ENCODE measurements at regions of chr3 and their contacts with region 1.

Region 1: GRCh38 chr3:28286595-28286994 is 45.2 kb downstream of the CMC1 start:
- DNase-seq: peak; percentile 8
- ATAC-seq: peak; percentile 96
- H3K4me3 ChIP-seq: no peak overlapping the region
- H3K27ac ChIP-seq: no peak overlapping the region
- H3K4me1 ChIP-seq: no peaks in the 10 kb centered on the region
- H3K27me3 ChIP-seq: no peaks in the 10 kb centered on the region
- CTCF ChIP-seq: peak; percentile 48 to 63 (median 50); a peak in 5 of 6 replicates
- EP300 ChIP-seq: no peak
- POLR2A ChIP-seq: no peak
- RAD21 ChIP-seq: peak; percentile 73

Region 2: GRCh38 chr3:28252001-28252431 is 34.6 kb before region 1 on chr3:
- CTCF ChIA-PET with region 1: interaction called, 9 read pairs
- POLR2A ChIA-PET with region 1: interaction called, 3 read pairs
- RAD21 ChIA-PET with region 1: interaction called, 25 read pairs
- SMC1A ChIA-PET with region 1: interaction called, 5 read pairs
- in situ Hi-C with region 1: no loop called
- intact Hi-C with region 1: no loop called
- DNase-seq: no peak
- ATAC-seq: peak; percentile 86
- H3K4me3 ChIP-seq: no peak overlapping the region
- H3K27ac ChIP-seq: no peak overlapping the region
- H3K4me1 ChIP-seq: no peaks in the 10 kb centered on the region; the same call in 1 of the 2 replicates
- H3K27me3 ChIP-seq: no peaks in the 10 kb centered on the region
- CTCF ChIP-seq: no peak
- EP300 ChIP-seq: peak in 1 of 2 experiments; percentile 46; a peak in 2 of 4 replicates
- POLR2A ChIP-seq: no peak
- RAD21 ChIP-seq: no peak

Region 3: GRCh38 chr3:28637742-28638141 is 351.1 kb after region 1 on chr3:
- CTCF ChIA-PET with region 1: no interaction called
- POLR2A ChIA-PET with region 1: no interaction called
- RAD21 ChIA-PET with region 1: no interaction called
- SMC1A ChIA-PET with region 1: no interaction called
- in situ Hi-C with region 1: no loop called
- intact Hi-C with region 1: no loop called
- DNase-seq: no peak
- ATAC-seq: no peak
- H3K4me3 ChIP-seq: no peak overlapping the region
- H3K27ac ChIP-seq: no peak overlapping the region
- H3K4me1 ChIP-seq: no peaks in the 10 kb centered on the region
- H3K27me3 ChIP-seq: no peaks in the 10 kb centered on the region
- CTCF ChIP-seq: no peak
- EP300 ChIP-seq: no peak
- POLR2A ChIP-seq: no peak
- RAD21 ChIP-seq: no peak